A549 (cell line): ENCODE measurements at regions of chr17 and their contacts with region 1.

Region 1: DNA sequence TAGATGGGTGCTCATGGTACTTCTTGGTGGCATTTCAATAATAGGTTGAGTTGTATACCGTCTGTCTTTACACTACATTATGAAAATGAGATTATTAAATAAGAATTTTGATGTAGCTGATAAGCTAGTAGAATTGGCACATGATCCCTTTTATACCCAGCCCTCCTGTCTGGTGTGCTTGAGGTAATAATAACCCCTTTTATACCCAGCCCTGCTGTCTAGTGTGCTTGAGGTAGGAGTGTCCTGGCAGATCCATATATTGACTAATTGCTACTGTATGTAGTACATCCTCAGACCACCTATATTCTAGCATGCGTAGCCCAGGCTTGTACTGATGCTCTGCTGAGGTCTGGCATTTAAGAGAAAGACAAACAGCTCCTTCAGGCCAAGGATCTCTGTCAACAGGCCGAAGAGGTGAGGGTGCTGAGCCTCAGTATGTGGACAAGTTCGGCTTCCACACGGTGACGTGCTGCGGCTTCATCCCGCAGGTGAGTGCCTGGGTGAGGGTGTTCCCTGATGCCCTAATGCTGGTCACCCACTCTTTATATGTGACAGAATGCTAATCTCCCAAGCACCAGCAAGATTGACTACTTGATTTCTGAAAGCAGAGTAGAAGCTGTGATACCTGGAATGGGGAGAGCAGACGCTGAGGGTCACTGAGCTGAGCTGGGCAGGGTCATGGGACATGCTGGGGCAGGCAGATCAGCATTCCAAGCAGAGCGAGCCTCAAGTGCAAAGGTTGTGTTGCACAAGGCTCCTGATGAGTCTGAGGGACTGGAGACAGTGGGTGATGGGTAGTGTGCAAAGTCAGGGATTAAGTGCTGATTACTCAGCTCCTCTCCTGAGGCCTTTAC is 5.7 kb downstream of the FN3K start:
- DNase-seq: peak in 1 of 2 experiments; percentile 65
- ATAC-seq: no peak
- H3K4me3 ChIP-seq: no peak overlapping the region
- H3K27ac ChIP-seq: no peak overlapping the region
- H3K4me1 ChIP-seq: no peaks in the 10 kb centered on the region
- CTCF ChIP-seq: no peak
- EP300 ChIP-seq: no peak
- POLR2A ChIP-seq: no peak
- RAD21 ChIP-seq: no peak

Region 2: GRCh38 chr17:82690771-82691489 is 50.2 kb before region 1 on chr17:
- CTCF ChIA-PET with region 1: no interaction called
- POLR2A ChIA-PET with region 1: no interaction called
- DNase-seq: no peak
- ATAC-seq: no peak
- H3K4me3 ChIP-seq: no peak overlapping the region
- H3K27ac ChIP-seq: no peak overlapping the region
- H3K4me1 ChIP-seq: peaks cover 23% of the 10 kb centered on the region
- CTCF ChIP-seq: no peak
- EP300 ChIP-seq: no peak
- POLR2A ChIP-seq: no peak
- RAD21 ChIP-seq: no peak

Region 3: DNA sequence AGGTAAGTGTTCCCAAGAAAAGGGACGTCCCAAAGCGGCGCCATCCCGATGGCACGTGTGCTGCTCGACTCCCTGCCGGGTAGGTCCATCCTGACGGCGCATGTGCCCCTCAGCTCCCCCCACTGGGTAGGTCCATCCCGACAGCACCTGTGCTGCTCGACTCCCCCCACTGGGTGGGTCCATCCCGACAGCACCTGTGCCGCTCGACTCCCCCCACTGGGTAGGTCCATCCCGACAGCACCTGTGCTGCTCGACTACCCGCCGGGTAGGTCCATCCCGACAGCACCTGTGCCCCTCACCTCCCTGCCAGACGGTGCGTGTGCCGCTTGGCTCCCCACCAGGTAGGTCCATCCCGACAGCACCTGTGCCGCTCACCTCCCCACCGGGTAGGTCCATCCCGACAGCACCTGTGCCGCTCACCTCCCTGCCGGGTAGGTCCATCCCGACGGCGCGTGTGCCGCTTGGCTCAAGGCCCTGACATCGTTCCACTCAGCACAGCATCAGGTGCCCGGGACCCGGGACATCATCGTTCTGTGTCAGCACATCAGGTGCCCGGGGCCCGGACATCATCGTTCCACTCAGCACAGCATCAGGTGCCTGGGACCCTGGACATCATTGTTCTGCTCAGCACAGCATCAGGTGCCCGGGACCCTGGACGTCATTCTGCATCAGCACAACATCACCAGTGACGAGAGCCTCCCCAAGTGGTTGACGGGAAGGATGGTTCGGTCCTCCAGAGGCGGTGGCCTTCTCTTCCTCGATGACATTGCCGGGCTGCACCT is 11.5 kb before region 1 on chr17:
- CTCF ChIA-PET with region 1: interaction called, 11 read pairs
- POLR2A ChIA-PET with region 1: no interaction called
- DNase-seq: no peak
- ATAC-seq: peak; percentile 27 to 32; a peak in 3 of 6 replicates
- H3K4me3 ChIP-seq: no peak overlapping the region
- H3K27ac ChIP-seq: no peak overlapping the region
- H3K4me1 ChIP-seq: no peaks in the 10 kb centered on the region
- CTCF ChIP-seq: no peak
- EP300 ChIP-seq: no peak
- POLR2A ChIP-seq: no peak
- RAD21 ChIP-seq: no peak